Naive thymus-derived CD4-positive, alpha-beta T cell (primary cell): ENCODE measurements at regions of chr10 and their contacts with region 1.

Region 1: GRCh38 chr10:63268798-63269503 is 135.8 kb downstream of the NRBF2 start:
- DNase-seq: peak; percentile 55 to 95 (median 89)
- ATAC-seq: peak; percentile 95
- H3K4me3 ChIP-seq: peak overlapping the region; percentile 60
- H3K4me3 Mint-ChIP-seq: peak overlapping the region; percentile 93 to 99 (median 98)
- H3K27ac ChIP-seq: peak overlapping the region; percentile 91
- H3K27ac Mint-ChIP-seq: peak overlapping the region; percentile 97 to 100 (median 99)
- H3K4me1 ChIP-seq: peaks cover 9 to 19% of the 10 kb centered on the region in 2 donors
- H3K4me1 Mint-ChIP-seq: peaks cover 9 to 33% (median 19%) of the 10 kb centered on the region in 7 donors
- H3K27me3 ChIP-seq: no peaks in the 10 kb centered on the region
- H3K27me3 Mint-ChIP-seq: no peaks in the 10 kb centered on the region

Region 2: GRCh38 chr10:61992671-61993668 is 1276.0 kb before region 1 on chr10:
- CTCF ChIA-PET with region 1: no interaction called
- POLR2A ChIA-PET with region 1: no interaction called
- intact Hi-C with region 1: loop called in 1 of 2 experiments (anchors 5 kb)
- DNase-seq: peak in 8 of 9 donors; percentile 39 to 85 (median 72)
- ATAC-seq: peak; percentile 90
- H3K4me3 ChIP-seq: peak overlapping the region; percentile 28
- H3K4me3 Mint-ChIP-seq: peak overlapping the region in 9 of 10 donors; percentile 61 to 89 (median 64)
- H3K27ac ChIP-seq: peak overlapping the region; percentile 63
- H3K27ac Mint-ChIP-seq: peak overlapping the region; percentile 82 to 96 (median 93)
- H3K4me1 ChIP-seq: peaks cover 33 to 37% of the 10 kb centered on the region in 2 donors
- H3K4me1 Mint-ChIP-seq: peaks cover 28 to 81% (median 70%) of the 10 kb centered on the region in 7 donors
- H3K27me3 ChIP-seq: no peaks in the 10 kb centered on the region
- H3K27me3 Mint-ChIP-seq: no peaks in the 10 kb centered on the region

Region 3: GRCh38 chr10:62732841-62733653 is 535.9 kb before region 1 on chr10:
- CTCF ChIA-PET with region 1: no interaction called
- POLR2A ChIA-PET with region 1: no interaction called
- intact Hi-C with region 1: loop called in 1 of 2 experiments (anchors 5 kb)
- DNase-seq: peak in 8 of 9 donors; percentile 54 to 83 (median 76)
- ATAC-seq: peak; percentile 92
- H3K4me3 ChIP-seq: no peak overlapping the region
- H3K4me3 Mint-ChIP-seq: peak overlapping the region in 7 of 10 donors; percentile 14 to 72 (median 65)
- H3K27ac ChIP-seq: peak overlapping the region; percentile 22
- H3K27ac Mint-ChIP-seq: peak overlapping the region in 2 of 9 donors; percentile 78 to 85
- H3K4me1 ChIP-seq: peaks cover 24 to 49% of the 10 kb centered on the region in 2 donors
- H3K4me1 Mint-ChIP-seq: peaks cover 0 to 17% (median 0%) of the 10 kb centered on the region in 7 donors
- H3K27me3 ChIP-seq: no peaks in the 10 kb centered on the region
- H3K27me3 Mint-ChIP-seq: peaks cover 0 to 14% (median 0%) of the 10 kb centered on the region in 5 donors

Region 4: GRCh38 chr10:63217120-63217605 is 51.8 kb before region 1 on chr10:
- CTCF ChIA-PET with region 1: interaction called, 6 read pairs
- POLR2A ChIA-PET with region 1: interaction called, 20 read pairs
- intact Hi-C with region 1: loop called (anchors 1 kb)
- DNase-seq: peak in 7 of 9 donors; percentile 45 to 72 (median 61)
- ATAC-seq: peak; percentile 86
- H3K4me3 ChIP-seq: no peak overlapping the region
- H3K4me3 Mint-ChIP-seq: peak overlapping the region in 7 of 10 donors; percentile 2 to 56 (median 35)
- H3K27ac ChIP-seq: no peak overlapping the region
- H3K27ac Mint-ChIP-seq: peak overlapping the region in 8 of 9 donors; percentile 29 to 88 (median 56)
- H3K4me1 ChIP-seq: peaks cover 17 to 24% of the 10 kb centered on the region in 2 donors
- H3K4me1 Mint-ChIP-seq: peaks cover 38 to 64% (median 61%) of the 10 kb centered on the region in 7 donors
- H3K27me3 ChIP-seq: no peaks in the 10 kb centered on the region
- H3K27me3 Mint-ChIP-seq: no peaks in the 10 kb centered on the region

Region 5: DNA sequence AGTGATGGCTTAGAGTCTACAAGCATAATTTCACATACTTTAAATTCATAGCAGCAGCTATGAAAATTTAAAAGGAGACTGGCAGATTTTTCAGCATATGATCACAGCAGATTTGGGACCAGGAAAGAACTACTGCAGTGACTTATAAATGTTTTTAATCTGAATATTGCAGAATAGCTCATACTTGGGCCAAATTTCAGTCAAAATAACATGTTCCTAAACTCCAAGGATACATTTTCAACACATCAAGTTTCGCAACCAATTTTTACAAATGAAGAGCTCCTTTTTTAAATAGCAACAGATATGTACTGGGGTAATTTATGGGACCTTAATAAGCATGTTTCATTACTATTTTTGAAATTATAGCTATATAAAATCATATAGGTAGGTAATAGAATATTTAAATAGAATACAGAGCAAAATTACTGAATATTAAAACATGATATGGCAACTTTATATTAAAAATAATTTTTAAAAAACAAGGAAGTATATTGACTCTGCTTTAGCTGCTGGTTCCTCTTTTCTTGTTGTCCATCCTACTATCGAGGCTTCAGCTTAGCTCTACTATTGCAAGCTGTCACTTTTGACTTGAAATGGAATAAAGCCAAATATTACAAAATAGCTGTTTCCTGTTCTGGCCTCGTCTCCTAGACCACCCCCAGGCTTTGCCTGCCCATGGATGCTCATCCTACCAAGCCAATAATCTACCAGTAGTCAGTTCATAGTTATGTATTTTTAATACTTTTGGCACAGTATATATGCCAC is 12.8 kb before region 1 on chr10:
- CTCF ChIA-PET with region 1: interaction called, 5 read pairs
- POLR2A ChIA-PET with region 1: interaction called, 10 read pairs
- intact Hi-C with region 1: loop called in 1 of 2 experiments (anchors 1 kb)
- DNase-seq: no peak
- ATAC-seq: peak; percentile 54
- H3K4me3 ChIP-seq: no peak overlapping the region
- H3K4me3 Mint-ChIP-seq: peak overlapping the region in 8 of 10 donors; percentile 26 to 66 (median 48)
- H3K27ac ChIP-seq: no peak overlapping the region
- H3K27ac Mint-ChIP-seq: peak overlapping the region in 8 of 9 donors; percentile 32 to 85 (median 51)
- H3K4me1 ChIP-seq: peaks cover 26 to 40% of the 10 kb centered on the region in 2 donors
- H3K4me1 Mint-ChIP-seq: peaks cover 54 to 100% (median 92%) of the 10 kb centered on the region in 7 donors
- H3K27me3 ChIP-seq: no peaks in the 10 kb centered on the region
- H3K27me3 Mint-ChIP-seq: no peaks in the 10 kb centered on the region

Region 6: DNA sequence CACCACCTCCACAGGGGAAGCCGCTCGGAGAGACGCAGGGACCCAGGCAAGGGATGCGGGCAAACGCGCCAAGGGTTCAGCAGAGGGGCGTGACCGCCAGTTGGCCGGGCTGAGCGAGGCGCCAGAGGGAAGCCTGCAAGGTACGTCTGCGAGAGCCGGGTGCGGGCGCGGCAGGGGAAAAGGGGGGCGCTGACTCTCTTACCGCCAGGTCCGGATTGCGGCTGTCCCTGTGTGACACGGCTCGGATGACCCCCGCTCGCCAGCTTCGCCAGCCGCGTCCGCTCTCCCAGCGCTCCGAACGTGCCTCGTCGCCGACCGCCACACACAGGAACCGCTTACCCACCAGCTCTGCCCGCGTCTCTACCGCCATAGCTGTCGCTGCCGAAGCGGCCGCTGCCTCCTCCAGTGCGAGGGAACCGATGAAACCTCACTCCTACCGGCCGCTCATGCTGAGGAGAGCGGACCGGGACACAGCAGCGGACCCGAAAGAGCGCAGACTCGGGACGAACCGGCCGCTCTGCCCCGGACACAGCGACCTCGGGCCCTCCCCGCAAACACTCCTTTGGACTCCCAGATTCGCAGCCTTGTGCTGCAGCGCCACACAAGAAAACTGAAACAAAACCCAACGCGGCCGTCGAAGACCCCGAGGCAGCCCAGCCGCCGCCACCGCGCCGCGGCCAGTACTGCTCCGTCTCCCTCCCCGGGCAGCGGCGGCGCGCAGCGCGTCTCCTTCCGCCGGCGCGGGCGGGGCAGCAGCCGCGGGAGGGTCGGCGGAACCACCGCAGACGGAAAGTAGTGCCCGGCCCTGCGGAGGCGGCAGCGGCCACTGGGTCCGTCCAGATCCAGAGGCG is 196.6 kb after region 1 on chr10 and contains the start of gene JMJD1C:
- CTCF ChIA-PET with region 1: no interaction called
- POLR2A ChIA-PET with region 1: interaction called, 4 read pairs
- intact Hi-C with region 1: loop called (anchors 1 to 2 kb)
- DNase-seq: peak; percentile 49 to 72 (median 63)
- ATAC-seq: peak; percentile 85
- H3K4me3 ChIP-seq: peak within 1 kb of the TSS; percentile 89
- H3K4me3 Mint-ChIP-seq: peak within 1 kb of the TSS; percentile 88 to 98 (median 95)
- H3K27ac ChIP-seq: peak within 1 kb of the TSS; percentile 86
- H3K27ac Mint-ChIP-seq: peak within 1 kb of the TSS; percentile 68 to 97 (median 94)
- H3K4me1 ChIP-seq: peaks cover 0 to 16% of the 10 kb centered on the region in 2 donors
- H3K4me1 Mint-ChIP-seq: peaks cover 14 to 68% (median 34%) of the 10 kb centered on the region in 7 donors
- H3K27me3 ChIP-seq: no peaks in the 10 kb centered on the region
- H3K27me3 Mint-ChIP-seq: peaks cover 0 to 31% (median 0%) of the 10 kb centered on the region in 5 donors
- total RNA-seq, gene JMJD1C: 67.6 to 331 (median 137) TPM

Region 7: GRCh38 chr10:63720072-63720537 is 451.2 kb after region 1 on chr10:
- CTCF ChIA-PET with region 1: interaction called, 3 read pairs
- POLR2A ChIA-PET with region 1: no interaction called
- intact Hi-C with region 1: loop called (anchors 1 kb)
- DNase-seq: peak in 8 of 9 donors; percentile 33 to 74 (median 63)
- ATAC-seq: peak; percentile 87
- H3K4me3 ChIP-seq: no peak overlapping the region
- H3K4me3 Mint-ChIP-seq: peak overlapping the region in 3 of 10 donors; percentile 8 to 63 (median 16)
- H3K27ac ChIP-seq: no peak overlapping the region
- H3K27ac Mint-ChIP-seq: peak overlapping the region in 5 of 9 donors; percentile 1 to 71 (median 68)
- H3K4me1 ChIP-seq: no peaks in the 10 kb centered on the region
- H3K4me1 Mint-ChIP-seq: peaks cover 0 to 22% (median 7%) of the 10 kb centered on the region in 7 donors
- H3K27me3 ChIP-seq: no peaks in the 10 kb centered on the region
- H3K27me3 Mint-ChIP-seq: peaks cover 2 to 11% (median 3%) of the 10 kb centered on the region in 5 donors